GM12878 (cell line): ENCODE measurements at regions of chr13 and their contacts with region 1.

Region 1: GRCh38 chr13:46119883-46120614 is 15.2 kb upstream of the CPB2 start:
- DNase-seq: no peak
- ATAC-seq: no peak
- H3K4me3 ChIP-seq: no peak overlapping the region
- H3K27ac ChIP-seq: no peak overlapping the region
- H3K4me1 ChIP-seq: no peaks in the 10 kb centered on the region
- H3K27me3 ChIP-seq: no peaks in the 10 kb centered on the region; a peak in 1 of 4 replicates
- CTCF ChIP-seq: no peak
- EP300 ChIP-seq: no peak
- POLR2A ChIP-seq: no peak
- RAD21 ChIP-seq: no peak

Region 2: GRCh38 chr13:46071590-46072249 is 48.3 kb before region 1 on chr13:
- CTCF ChIA-PET with region 1: interaction called, 3 read pairs
- POLR2A ChIA-PET with region 1: no interaction called
- RAD21 ChIA-PET with region 1: no interaction called
- SMC1A ChIA-PET with region 1: interaction called, 3 read pairs
- in situ Hi-C with region 1: no loop called
- intact Hi-C with region 1: loop called (anchors 5 kb)
- DNase-seq: peak; percentile 70
- ATAC-seq: peak; percentile 96
- H3K4me3 ChIP-seq: no peak overlapping the region
- H3K27ac ChIP-seq: peak overlapping the region; percentile 91
- H3K4me1 ChIP-seq: peaks cover 23% of the 10 kb centered on the region
- H3K27me3 ChIP-seq: no peaks in the 10 kb centered on the region
- CTCF ChIP-seq: peak; percentile 21 to 53 (median 37); a peak in 4 of 6 replicates
- EP300 ChIP-seq: peak in 1 of 2 experiments; percentile 66; a peak in 1 of 4 replicates
- POLR2A ChIP-seq: 0 out of 2 replicates have a peak, but pooled peaks have one; percentile 34
- RAD21 ChIP-seq: peak; percentile 56

Region 3: DNA sequence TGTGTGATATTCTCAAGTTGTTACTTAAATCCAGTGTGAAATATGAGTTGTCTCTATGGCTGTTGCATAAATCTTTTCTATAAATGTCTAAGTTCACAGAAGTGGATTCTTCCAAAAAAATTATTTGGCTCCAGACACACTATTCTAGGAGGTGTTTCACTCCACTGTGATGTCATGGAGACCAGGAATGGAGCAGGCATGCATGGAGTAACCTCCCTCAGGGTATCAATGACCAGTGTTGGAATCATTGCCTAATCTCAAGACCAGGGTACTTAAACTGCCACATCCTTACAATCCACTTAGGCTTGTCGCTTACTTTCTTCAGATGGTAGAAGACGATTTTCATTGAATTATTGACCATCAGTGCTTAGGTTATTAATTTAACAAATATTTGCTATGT is 147.1 kb after region 1 on chr13:
- CTCF ChIA-PET with region 1: no interaction called
- POLR2A ChIA-PET with region 1: no interaction called
- RAD21 ChIA-PET with region 1: no interaction called
- SMC1A ChIA-PET with region 1: no interaction called
- in situ Hi-C with region 1: no loop called
- intact Hi-C with region 1: no loop called
- DNase-seq: no peak
- ATAC-seq: no peak
- H3K4me3 ChIP-seq: no peak overlapping the region
- H3K27ac ChIP-seq: no peak overlapping the region
- H3K4me1 ChIP-seq: no peaks in the 10 kb centered on the region
- H3K27me3 ChIP-seq: no peaks in the 10 kb centered on the region; a peak in 3 of 4 replicates
- CTCF ChIP-seq: no peak
- EP300 ChIP-seq: no peak
- POLR2A ChIP-seq: no peak
- RAD21 ChIP-seq: no peak